Right ventricle myocardium inferior (tissue), 1 donor: ENCODE measurements at regions of chr1 and their contacts with region 1.

Region 1: DNA sequence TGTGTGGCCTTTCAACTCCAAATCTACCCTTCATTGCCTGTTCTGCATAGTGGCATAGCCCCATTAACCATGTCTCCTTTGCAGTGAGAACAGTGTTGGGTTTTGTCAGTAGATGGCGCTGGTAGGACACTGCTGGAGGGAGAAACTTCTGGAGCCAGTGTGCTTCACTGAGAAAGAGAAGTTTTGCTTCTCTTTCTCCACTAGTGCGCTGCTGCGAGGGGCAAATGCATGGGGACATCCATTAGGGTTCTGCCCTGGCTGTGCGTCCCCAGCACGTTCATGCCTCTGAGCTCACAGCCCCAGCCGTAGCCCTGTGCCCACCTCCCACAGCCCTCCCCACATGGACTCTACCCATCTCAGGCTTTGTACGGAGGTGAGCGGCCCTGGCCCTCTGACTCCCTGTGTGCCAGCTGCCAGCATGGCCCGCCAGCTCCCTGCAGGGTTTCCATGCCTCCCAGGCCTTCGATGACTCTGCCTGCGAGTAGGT is 53.1 kb downstream of the RIMS3 start:
- DNase-seq: no peak
- ATAC-seq: peak; percentile 81

Region 2: GRCh38 chr1:39411526-39412478 is 1200.6 kb before region 1 on chr1:
- intact Hi-C with region 1: no loop called
- DNase-seq: no peak
- ATAC-seq: no peak

Region 3: DNA sequence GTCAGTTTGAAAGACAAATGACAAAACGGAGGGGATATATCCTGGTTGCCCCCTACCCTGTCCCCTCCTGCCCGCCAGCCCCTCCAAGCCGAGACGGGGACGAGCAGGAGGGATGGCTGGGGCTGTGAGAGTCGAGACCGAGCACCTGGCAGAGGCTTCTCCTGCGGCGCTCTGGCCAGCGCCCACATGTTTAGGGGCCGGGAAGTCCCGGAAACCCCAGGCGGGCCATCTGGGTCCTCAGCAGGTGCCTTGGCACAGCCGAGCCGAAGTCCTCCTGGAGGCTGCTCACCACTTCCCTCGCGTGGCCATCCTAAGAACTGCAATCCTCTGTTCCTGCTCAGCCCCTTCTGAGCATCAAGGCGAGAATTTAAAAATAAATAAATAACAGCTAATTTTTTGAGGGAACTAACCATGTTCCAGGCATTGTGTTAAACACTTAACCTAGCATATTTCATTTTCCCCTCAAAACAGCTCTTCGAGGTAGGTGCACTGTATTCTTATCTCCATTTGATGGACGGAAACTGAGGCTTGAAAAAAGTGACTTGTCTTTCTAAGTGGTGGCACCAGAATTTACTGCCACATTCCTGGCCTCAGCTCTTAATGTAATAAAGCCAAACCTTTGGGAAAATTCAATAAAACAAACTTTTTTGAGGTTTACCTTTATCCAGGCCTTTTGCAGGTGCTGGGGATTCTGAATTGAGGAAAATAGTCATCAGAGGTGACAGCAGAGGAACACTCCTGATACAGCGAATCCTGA is 56.6 kb after region 1 on chr1:
- intact Hi-C with region 1: loop called (anchors 5 kb)
- DNase-seq: peak; percentile 89
- ATAC-seq: peak; percentile 64

Region 4: GRCh38 chr1:40732756-40733301 is 120.4 kb after region 1 on chr1:
- intact Hi-C with region 1: no loop called
- DNase-seq: no peak
- ATAC-seq: no peak

Region 5: GRCh38 chr1:40849801-40850592 is 237.6 kb after region 1 on chr1:
- intact Hi-C with region 1: loop called (anchors 2 kb)
- DNase-seq: peak; percentile 86
- ATAC-seq: peak; percentile 77

Region 6: DNA sequence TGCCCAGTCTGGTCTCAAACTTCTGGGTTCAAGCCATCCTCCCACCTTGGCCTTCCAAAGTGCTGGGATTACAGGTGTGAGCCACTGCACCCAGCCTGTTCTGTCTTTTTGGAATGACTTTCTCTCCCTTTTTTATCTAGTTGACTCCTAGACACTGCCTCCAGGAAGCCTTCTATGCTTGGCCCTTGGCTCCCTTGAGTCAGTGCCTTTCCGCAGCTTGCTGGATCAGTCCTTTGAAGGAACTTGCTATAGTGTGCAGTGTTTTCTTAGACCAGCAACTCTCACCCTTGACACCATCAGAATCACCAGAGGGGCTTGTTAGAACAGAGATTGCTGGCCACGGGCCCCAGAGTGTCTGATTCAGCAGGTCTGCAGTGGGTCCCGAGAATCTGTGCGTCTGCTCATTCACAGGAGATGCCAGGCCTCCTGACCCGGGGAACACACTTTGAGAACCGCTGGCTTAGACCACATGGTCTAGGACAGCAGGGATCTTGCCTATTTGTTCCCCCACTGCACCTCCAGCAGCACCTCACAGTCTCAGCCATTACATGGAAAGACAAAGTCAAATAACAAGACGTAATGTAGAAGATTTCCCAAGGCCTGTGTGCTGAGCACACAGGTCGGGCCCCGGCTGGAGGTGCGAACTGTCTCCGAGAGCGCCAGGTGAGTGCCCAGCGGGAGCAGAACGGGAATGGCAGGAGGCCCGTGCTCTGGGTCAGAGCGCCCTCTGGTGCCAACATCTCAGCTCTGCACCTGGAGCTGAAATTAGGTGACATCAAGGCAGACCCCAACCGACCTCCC is 339.8 kb after region 1 on chr1:
- intact Hi-C with region 1: loop called (anchors 5 kb)
- DNase-seq: peak; percentile 84
- ATAC-seq: peak; percentile 77